Caco-2 (cell line): ENCODE measurements at regions of chr11 and their contacts with region 1.

Region 1: DNA sequence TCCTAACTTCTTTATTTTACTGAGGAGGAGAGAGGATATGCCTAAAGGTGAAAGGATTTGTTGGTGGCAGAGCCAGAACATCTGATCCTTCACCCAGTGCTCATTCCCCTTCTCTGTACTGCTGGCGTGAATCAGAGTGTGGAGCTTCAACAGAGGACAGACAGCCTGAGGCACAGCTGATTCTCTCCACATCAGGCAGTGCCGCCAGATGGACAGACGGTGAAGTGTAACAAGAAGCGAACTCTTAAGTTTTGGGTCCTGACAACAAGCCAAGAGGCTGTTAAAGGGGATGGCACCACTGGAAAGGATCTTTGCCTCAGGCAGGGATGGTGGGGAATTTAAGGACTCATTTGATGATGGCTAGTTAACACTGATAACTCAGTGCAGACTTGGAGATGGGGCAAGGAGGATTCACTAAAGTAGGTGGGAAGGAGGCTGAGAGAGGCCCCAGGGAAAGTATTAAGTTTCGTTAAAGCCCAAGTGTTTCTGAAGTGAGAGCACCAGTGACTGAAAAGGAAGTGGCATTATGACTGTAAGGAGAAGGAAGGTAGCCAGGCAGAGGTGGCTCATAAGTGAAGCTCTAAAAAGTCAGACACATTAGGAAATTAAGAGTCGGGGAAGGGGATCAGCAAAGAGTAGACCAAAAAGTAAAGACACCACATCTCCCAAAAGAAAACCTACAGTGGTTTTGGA is 81.3 kb downstream of the CLPB start:
- DNase-seq: peak; percentile 46 to 60
- H3K4me3 ChIP-seq: no peak overlapping the region
- H3K4me3 Mint-ChIP-seq: no peak overlapping the region
- H3K27ac Mint-ChIP-seq: no peak overlapping the region
- H3K4me1 ChIP-seq: peaks cover 7% of the 10 kb centered on the region; the same call in 1 of the 2 replicates
- H3K4me1 Mint-ChIP-seq: peaks cover 9% of the 10 kb centered on the region
- H3K27me3 ChIP-seq: no peaks in the 10 kb centered on the region
- H3K27me3 Mint-ChIP-seq: no peaks in the 10 kb centered on the region
- CTCF ChIP-seq: peak; percentile 21 to 35

Region 2: GRCh38 chr11:72112321-72113219 is 240.4 kb before region 1 on chr11 and contains the start of gene ANAPC15:
- CTCF ChIA-PET with region 1: no interaction called
- POLR2A ChIA-PET with region 1: no interaction called
- intact Hi-C with region 1: no loop called
- DNase-seq: peak; percentile 99 to 100
- H3K4me3 ChIP-seq: peak within 1 kb of the TSS; percentile 52
- H3K4me3 Mint-ChIP-seq: peak within 1 kb of the TSS; percentile 94
- H3K27ac Mint-ChIP-seq: peak within 1 kb of the TSS; percentile 100
- H3K4me1 ChIP-seq: peaks cover 9% of the 10 kb centered on the region
- H3K4me1 Mint-ChIP-seq: no peaks in the 10 kb centered on the region
- H3K27me3 ChIP-seq: no peaks in the 10 kb centered on the region
- H3K27me3 Mint-ChIP-seq: no peaks in the 10 kb centered on the region
- CTCF ChIP-seq: no peak
- total RNA-seq, gene ANAPC15: 98.6 and 105 TPM in 2 replicates

Region 3: GRCh38 chr11:72398058-72398758 is 45.2 kb after region 1 on chr11:
- CTCF ChIA-PET with region 1: interaction called, 10 read pairs
- POLR2A ChIA-PET with region 1: interaction called, 3 read pairs
- intact Hi-C with region 1: loop called (anchors 1 kb)
- DNase-seq: peak; percentile 87 to 90
- H3K4me3 ChIP-seq: no peak overlapping the region
- H3K4me3 Mint-ChIP-seq: no peak overlapping the region
- H3K27ac Mint-ChIP-seq: peak overlapping the region; percentile 56
- H3K4me1 ChIP-seq: peaks cover 23% of the 10 kb centered on the region
- H3K4me1 Mint-ChIP-seq: peaks cover 9% of the 10 kb centered on the region
- H3K27me3 ChIP-seq: no peaks in the 10 kb centered on the region
- H3K27me3 Mint-ChIP-seq: no peaks in the 10 kb centered on the region
- CTCF ChIP-seq: no peak